A673 (cell line): ENCODE measurements at regions of chr13 and their contacts with region 1.

Region 1: DNA sequence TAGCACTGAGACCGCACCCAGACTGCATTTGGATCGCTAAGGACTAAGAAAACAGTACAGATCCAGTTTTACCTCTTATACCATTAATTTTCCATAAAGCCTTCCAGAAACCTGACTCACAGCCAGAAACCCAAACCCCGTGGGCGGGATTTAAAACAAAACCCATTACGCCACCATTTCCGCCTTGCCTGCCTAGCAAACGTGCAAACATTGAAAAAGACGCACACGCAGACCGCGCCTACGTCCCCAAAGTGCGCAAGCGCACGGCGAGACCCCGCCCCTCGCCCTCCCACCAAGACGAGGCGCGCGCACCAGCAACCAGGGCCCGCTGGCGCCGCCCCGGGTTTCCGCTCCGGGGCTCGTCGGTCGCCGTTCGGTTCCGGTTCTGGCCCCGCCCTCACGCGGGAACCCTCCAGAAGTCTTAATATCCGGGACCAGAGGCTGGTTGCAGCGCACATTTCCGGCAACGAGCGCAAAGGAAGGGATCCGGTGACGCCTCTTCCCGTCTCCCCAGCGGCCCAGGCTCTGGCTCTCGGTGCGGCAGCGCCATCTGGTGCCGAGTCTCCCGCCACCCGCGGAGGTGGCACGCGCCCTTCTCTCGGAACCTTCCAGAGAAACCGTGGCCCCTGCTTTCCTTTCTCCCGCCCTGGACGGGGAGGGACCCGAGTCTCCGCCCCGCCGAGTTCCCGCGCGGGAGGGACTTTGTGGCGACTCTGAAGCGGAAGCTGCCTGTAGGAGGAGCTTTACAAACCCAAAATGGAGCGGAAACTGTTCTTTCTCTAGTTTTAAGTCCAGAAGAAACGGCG is 256.9 kb upstream of the STARD13 start:
- DNase-seq: peak; percentile 99
- H3K4me3 ChIP-seq: peak overlapping the region; percentile 43
- H3K27ac ChIP-seq: peak overlapping the region; percentile 99
- H3K4me1 ChIP-seq: peaks cover 64% of the 10 kb centered on the region
- H3K27me3 ChIP-seq: no peaks in the 10 kb centered on the region
- CTCF ChIP-seq: peak; percentile 95

Region 2: DNA sequence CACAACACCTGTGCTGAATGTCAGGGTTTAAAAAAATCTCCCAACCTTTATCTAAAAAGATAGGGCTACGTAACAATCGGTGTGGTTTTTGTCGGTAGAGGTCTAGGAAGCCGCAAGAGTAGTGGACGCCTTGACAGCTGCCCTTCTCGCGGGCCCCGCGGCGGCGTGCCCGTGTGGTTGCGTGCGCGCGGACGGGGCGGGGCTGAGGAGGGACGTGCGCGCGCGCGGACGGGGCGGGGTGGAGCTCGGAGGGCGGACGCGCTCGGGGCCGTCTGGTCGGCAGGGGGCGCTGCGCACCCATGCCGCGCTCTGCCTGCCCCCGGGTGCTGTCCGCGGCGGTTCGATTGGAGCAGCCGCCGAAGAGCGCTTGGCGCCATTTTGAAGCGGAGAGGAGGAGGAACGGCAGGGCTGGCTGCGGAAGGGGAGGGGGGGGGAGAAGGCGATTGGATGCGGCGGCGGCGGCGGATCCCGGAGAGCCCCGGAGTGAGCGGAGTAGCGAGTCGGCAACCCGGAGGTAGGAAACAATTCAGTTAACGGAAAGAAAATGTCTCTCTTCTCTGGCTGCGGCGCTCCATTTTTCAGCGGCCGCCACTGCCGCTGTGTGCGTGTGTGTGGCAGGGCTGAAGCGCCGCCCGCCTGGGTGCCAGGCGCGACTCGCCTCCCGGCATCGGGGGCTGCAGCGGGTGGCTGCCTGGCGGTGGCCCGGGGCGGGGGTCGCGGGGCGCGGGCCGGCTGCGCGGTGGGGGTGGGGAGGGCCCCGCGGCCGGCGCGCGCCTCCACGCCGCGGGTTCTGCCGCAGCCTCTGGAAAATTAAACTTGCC is 956.2 kb before region 1 on chr13 and contains the start of gene PDS5B:
- CTCF ChIA-PET with region 1: interaction called, 3 read pairs
- POLR2A ChIA-PET with region 1: no interaction called
- intact Hi-C with region 1: loop called (anchors 1 kb)
- DNase-seq: peak; percentile 98
- H3K4me3 ChIP-seq: peak within 1 kb of the TSS; percentile 77
- H3K27ac ChIP-seq: peak within 1 kb of the TSS; percentile 91
- H3K4me1 ChIP-seq: peaks cover 8% of the 10 kb centered on the region
- H3K27me3 ChIP-seq: no peaks in the 10 kb centered on the region
- CTCF ChIP-seq: peak; percentile 66
- total RNA-seq, gene PDS5B: 94.7 and 95.5 TPM in 2 replicates

Region 3: GRCh38 chr13:33114146-33114545 is 428.3 kb before region 1 on chr13:
- CTCF ChIA-PET with region 1: no interaction called
- POLR2A ChIA-PET with region 1: no interaction called
- intact Hi-C with region 1: no loop called
- DNase-seq: no peak
- H3K4me3 ChIP-seq: no peak overlapping the region
- H3K27ac ChIP-seq: no peak overlapping the region
- H3K4me1 ChIP-seq: peaks cover 29% of the 10 kb centered on the region
- H3K27me3 ChIP-seq: no peaks in the 10 kb centered on the region
- CTCF ChIP-seq: no peak

Region 4: GRCh38 chr13:33174931-33175330 is 367.6 kb before region 1 on chr13:
- CTCF ChIA-PET with region 1: no interaction called
- POLR2A ChIA-PET with region 1: no interaction called
- intact Hi-C with region 1: loop called (anchors 2 kb)
- DNase-seq: no peak
- H3K4me3 ChIP-seq: no peak overlapping the region
- H3K27ac ChIP-seq: peak overlapping the region; percentile 96
- H3K4me1 ChIP-seq: peaks cover 89% of the 10 kb centered on the region
- H3K27me3 ChIP-seq: no peaks in the 10 kb centered on the region
- CTCF ChIP-seq: no peak

Region 5: DNA sequence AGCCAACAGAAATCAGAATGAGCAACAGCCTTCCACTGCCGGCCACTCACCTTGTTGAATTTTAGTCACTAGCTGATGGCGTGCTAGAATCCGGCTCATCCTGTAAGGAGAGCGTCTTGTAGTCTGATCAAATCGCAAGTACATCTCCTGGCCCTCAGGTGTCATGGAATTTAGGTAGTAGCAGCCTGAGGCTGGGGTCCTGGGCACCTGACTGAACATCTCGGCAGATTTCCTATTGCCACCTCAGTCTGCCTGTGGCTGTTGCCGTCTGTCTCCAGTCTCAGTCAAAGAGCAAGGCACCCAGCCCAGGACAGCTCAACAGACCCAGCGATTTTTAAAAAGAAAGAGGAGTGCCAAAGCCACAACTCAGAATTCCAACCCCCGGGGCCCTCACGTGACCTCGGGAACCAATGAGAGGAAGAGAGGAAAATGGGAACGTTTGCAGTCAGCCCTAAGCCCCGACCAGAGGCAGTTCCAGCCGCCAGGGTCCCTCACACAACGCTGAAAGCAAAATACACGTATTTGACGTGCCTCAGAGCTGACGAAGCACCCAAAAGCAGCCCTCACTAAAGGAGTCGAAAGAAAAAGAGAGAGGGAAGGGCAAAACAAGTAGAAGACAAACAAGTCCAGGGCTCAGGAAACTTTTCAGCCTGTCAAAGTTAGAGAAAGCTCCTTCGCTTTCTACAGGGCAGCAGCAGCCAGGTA is 256.9 kb before region 1 on chr13 and contains the start of gene STARD13:
- CTCF ChIA-PET with region 1: no interaction called
- POLR2A ChIA-PET with region 1: no interaction called
- intact Hi-C with region 1: loop called (anchors 5 kb)
- DNase-seq: peak; percentile 98
- H3K4me3 ChIP-seq: peak within 1 kb of the TSS; percentile 58
- H3K27ac ChIP-seq: peak within 1 kb of the TSS; percentile 72
- H3K4me1 ChIP-seq: peaks cover 24% of the 10 kb centered on the region
- H3K27me3 ChIP-seq: no peaks in the 10 kb centered on the region
- CTCF ChIP-seq: peak; percentile 53
- total RNA-seq, gene STARD13: 45.7 and 48.7 TPM in 2 replicates

Region 6: GRCh38 chr13:33438918-33439317 is 103.6 kb before region 1 on chr13:
- CTCF ChIA-PET with region 1: interaction called, 5 read pairs
- POLR2A ChIA-PET with region 1: interaction called, 5 read pairs
- intact Hi-C with region 1: loop called (anchors 2 kb)
- DNase-seq: no peak
- H3K4me3 ChIP-seq: no peak overlapping the region
- H3K27ac ChIP-seq: peak overlapping the region; percentile 96
- H3K4me1 ChIP-seq: peaks cover 47% of the 10 kb centered on the region
- H3K27me3 ChIP-seq: no peaks in the 10 kb centered on the region
- CTCF ChIP-seq: no peak

Region 7: GRCh38 chr13:33723772-33724435 is 181.4 kb after region 1 on chr13:
- CTCF ChIA-PET with region 1: interaction called, 3 read pairs
- POLR2A ChIA-PET with region 1: no interaction called
- intact Hi-C with region 1: loop called (anchors 1 kb)
- DNase-seq: peak; percentile 90
- H3K4me3 ChIP-seq: no peak overlapping the region
- H3K27ac ChIP-seq: no peak overlapping the region
- H3K4me1 ChIP-seq: peaks cover 26% of the 10 kb centered on the region
- H3K27me3 ChIP-seq: no peaks in the 10 kb centered on the region
- CTCF ChIP-seq: peak; percentile 89